WTC11 (cell line): ENCODE measurements at regions of chr2 and their contacts with region 1.

Region 1: GRCh38 chr2:72887754-72888437 is 688 bp downstream of the SPR start:
- DNase-seq: peak; percentile 97
- ATAC-seq: peak; percentile 68
- H3K4me3 Mint-ChIP-seq: peak overlapping the region; percentile 67
- H3K27ac Mint-ChIP-seq: no peak overlapping the region
- H3K4me1 Mint-ChIP-seq: peaks cover 18% of the 10 kb centered on the region
- H3K27me3 Mint-ChIP-seq: peaks cover 58% of the 10 kb centered on the region
- CTCF ChIP-seq: peak; percentile 82

Region 2: GRCh38 chr2:72813841-72814240 is 74.1 kb before region 1 on chr2:
- CTCF ChIA-PET with region 1: interaction called, 10 read pairs
- POLR2A ChIA-PET with region 1: no interaction called
- DNase-seq: no peak
- ATAC-seq: no peak
- H3K4me3 Mint-ChIP-seq: no peak overlapping the region
- H3K27ac Mint-ChIP-seq: no peak overlapping the region
- H3K4me1 Mint-ChIP-seq: peaks cover 6% of the 10 kb centered on the region; the same call in 1 of the 2 replicates
- H3K27me3 Mint-ChIP-seq: no peaks in the 10 kb centered on the region; the same call in 1 of the 2 replicates
- CTCF ChIP-seq: no peak

Region 3: DNA sequence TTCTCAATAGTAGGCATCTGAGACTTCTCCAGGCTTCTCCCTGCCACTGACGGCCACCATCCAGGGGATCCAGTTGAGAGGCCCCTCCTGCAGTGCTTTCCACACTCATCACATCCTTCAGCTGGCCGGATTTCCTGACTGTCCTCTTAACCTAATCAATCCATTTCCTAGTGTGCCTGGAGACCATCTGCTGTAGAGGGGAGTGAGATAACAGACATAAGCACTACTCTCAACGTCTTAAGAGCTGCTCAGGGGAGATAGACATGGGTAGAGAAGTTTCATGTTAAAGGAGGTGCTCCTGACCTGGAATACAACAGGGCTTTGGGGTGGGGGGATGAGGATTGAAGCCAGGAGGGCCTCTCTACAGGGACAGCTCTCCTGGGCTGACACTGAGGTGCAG is 13.5 kb after region 1 on chr2:
- CTCF ChIA-PET with region 1: interaction called, 16 read pairs
- POLR2A ChIA-PET with region 1: no interaction called
- DNase-seq: no peak
- ATAC-seq: no peak
- H3K4me3 Mint-ChIP-seq: no peak overlapping the region
- H3K27ac Mint-ChIP-seq: no peak overlapping the region
- H3K4me1 Mint-ChIP-seq: peaks cover 3% of the 10 kb centered on the region; the same call in 1 of the 2 replicates
- H3K27me3 Mint-ChIP-seq: peaks cover 94% of the 10 kb centered on the region
- CTCF ChIP-seq: no peak

Region 4: GRCh38 chr2:72924353-72925240 is 36.7 kb after region 1 on chr2:
- CTCF ChIA-PET with region 1: interaction called, 165 read pairs
- POLR2A ChIA-PET with region 1: interaction called, 3 read pairs
- DNase-seq: peak; percentile 58
- ATAC-seq: peak; percentile 14
- H3K4me3 Mint-ChIP-seq: peak overlapping the region; percentile 72
- H3K27ac Mint-ChIP-seq: no peak overlapping the region
- H3K4me1 Mint-ChIP-seq: peaks cover 28% of the 10 kb centered on the region
- H3K27me3 Mint-ChIP-seq: no peaks in the 10 kb centered on the region
- CTCF ChIP-seq: no peak

Region 5: GRCh38 chr2:72963423-72964145 is 75.7 kb after region 1 on chr2:
- CTCF ChIA-PET with region 1: interaction called, 80 read pairs
- POLR2A ChIA-PET with region 1: interaction called, 3 read pairs
- DNase-seq: peak; percentile 73
- ATAC-seq: peak; percentile 84
- H3K4me3 Mint-ChIP-seq: no peak overlapping the region
- H3K27ac Mint-ChIP-seq: peak overlapping the region; percentile 98
- H3K4me1 Mint-ChIP-seq: peaks cover 53% of the 10 kb centered on the region
- H3K27me3 Mint-ChIP-seq: peaks cover 7% of the 10 kb centered on the region
- CTCF ChIP-seq: no peak

Region 6: DNA sequence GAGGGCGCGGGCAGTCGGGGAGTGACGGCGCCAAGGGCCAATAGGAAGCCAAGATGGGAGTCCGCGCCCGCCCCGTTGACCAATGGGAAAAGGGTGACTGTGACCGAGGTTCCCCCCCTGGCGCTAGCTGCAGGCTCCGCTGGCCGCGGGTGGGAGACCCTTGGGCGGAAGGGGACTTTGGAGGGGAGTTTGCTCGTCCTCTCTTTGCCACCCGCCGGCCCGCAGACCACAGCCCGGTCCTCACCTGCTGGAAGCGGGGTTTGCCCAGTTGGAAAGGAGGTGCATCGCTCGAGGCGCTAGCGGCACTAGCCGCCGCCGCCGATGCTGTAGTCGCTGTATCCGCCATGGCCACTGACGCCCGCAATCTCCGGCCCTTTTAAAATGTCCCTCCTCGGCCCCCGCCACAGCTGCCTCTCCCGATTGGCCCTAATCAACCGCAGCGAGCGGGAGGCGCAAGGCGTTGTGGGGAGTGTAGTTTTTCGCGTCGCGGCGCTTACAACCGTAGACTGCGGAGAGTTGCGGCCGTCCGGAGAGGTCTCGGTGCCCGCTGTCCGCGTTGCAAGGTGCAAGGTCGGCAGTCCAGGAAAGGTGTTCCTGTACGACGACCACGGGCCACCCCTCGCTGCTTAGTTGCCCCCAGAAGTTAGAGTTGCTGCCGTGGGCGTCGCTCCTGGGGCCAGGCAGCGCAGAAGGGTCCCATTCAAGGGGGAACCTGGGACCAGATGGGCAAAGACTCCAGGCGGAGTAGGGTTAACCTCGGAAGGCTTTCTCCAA is 183.7 kb after region 1 on chr2 and contains the start of gene SFXN5:
- CTCF ChIA-PET with region 1: interaction called, 10 read pairs
- POLR2A ChIA-PET with region 1: no interaction called
- DNase-seq: peak; percentile 99
- ATAC-seq: peak; percentile 86
- H3K4me3 Mint-ChIP-seq: peak within 1 kb of the TSS; percentile 77
- H3K27ac Mint-ChIP-seq: peak within 1 kb of the TSS; percentile 78
- H3K4me1 Mint-ChIP-seq: peaks cover 22% of the 10 kb centered on the region
- H3K27me3 Mint-ChIP-seq: no peaks in the 10 kb centered on the region; the same call in 1 of the 2 replicates
- CTCF ChIP-seq: no peak
- total RNA-seq, gene SFXN5: 23.1 to 25.9 TPM (median 23.6 TPM) in 3 replicates

Region 7: GRCh38 chr2:73212448-73213176 is 324.7 kb after region 1 on chr2:
- CTCF ChIA-PET with region 1: interaction called, 35 read pairs
- POLR2A ChIA-PET with region 1: no interaction called
- DNase-seq: peak; percentile 86
- ATAC-seq: peak; percentile 77
- H3K4me3 Mint-ChIP-seq: no peak overlapping the region
- H3K27ac Mint-ChIP-seq: peak overlapping the region; percentile 57
- H3K4me1 Mint-ChIP-seq: peaks cover 35% of the 10 kb centered on the region
- H3K27me3 Mint-ChIP-seq: peaks cover 19% of the 10 kb centered on the region
- CTCF ChIP-seq: peak; percentile 81